Transverse colon (tissue), 4 donors: ENCODE measurements at regions of chr13 and their contacts with region 1.

Region 1: DNA sequence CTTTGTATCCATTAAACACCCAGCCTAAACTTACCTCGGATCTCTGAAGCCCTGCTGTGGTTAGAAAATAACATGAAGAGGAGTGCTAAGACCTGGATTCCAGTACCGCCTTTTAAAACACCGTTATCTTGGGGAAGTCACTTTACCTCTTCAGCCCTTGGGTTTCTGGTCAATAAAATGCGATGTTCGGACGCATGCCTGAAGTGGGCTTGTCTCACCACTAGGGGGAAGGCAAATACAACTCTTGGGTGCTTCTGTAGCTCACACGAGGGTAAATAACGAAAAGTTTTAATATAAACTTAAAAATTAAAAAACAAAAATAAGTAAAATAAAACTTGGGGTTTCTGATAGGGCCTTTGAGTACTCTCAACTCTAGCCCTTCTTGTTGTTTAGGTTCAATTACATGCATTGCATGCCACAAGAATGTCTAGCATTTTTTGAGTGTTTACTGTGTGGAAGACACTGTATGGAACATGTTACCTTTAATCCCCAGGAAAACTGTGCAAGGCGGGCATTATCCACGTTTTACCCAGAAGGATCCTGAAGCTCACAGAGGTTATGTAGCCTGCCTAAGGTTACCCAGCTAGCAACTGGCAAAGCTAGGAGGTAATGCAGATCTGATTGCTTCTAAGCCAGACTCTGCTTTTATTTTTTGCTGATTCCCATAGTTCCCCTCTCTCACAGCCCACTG is 240.4 kb downstream of the LMO7 start:
- DNase-seq: peak; percentile 53
- H3K4me3 ChIP-seq: no peak overlapping the region
- H3K27ac ChIP-seq: no peak overlapping the region
- H3K4me1 ChIP-seq: peaks cover 0 to 9% (median 0%) of the 10 kb centered on the region in 4 donors
- H3K27me3 ChIP-seq: no peaks in the 10 kb centered on the region
- CTCF ChIP-seq: peak; percentile 82 to 91 (median 87)
- EP300 ChIP-seq: no peak
- POLR2A ChIP-seq: no peak

Region 2: DNA sequence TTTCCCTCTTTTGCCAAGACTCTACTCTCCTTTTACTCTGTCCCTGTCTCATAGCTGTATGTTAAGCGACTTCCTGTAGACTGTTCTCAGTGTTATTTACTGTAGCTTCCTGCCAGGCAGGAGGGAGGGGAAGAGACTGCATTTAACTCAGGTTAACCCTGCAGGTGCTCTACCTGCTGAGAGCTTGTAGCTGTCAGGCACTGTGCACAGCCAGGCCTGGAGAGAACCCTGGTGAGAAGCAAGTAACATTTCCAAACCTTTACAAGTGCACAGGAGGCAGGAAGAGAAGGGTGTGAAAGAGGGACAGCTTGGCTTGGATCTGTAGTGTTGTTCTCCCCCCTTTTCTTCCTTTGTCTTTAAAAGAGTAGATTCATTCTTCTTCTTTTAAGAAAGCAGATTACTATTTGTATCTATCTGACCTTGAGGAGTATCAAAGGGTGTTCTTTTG is 73.3 kb before region 1 on chr13:
- in situ Hi-C with region 1: no loop called
- intact Hi-C with region 1: no loop called
- DNase-seq: peak; percentile 35
- H3K4me3 ChIP-seq: no peak overlapping the region
- H3K27ac ChIP-seq: peak overlapping the region; percentile 71 to 85 (median 78)
- H3K4me1 ChIP-seq: peaks cover 0 to 36% (median 16%) of the 10 kb centered on the region in 4 donors
- H3K27me3 ChIP-seq: no peaks in the 10 kb centered on the region
- CTCF ChIP-seq: no peak
- EP300 ChIP-seq: no peak
- POLR2A ChIP-seq: peak; percentile 49

Region 3: GRCh38 chr13:76016799-76017400 is 140.4 kb after region 1 on chr13:
- in situ Hi-C with region 1: no loop called
- intact Hi-C with region 1: loop called (anchors 10 kb)
- DNase-seq: peak; percentile 8
- H3K4me3 ChIP-seq: no peak overlapping the region
- H3K27ac ChIP-seq: no peak overlapping the region
- H3K4me1 ChIP-seq: peaks cover 0 to 3% (median 0%) of the 10 kb centered on the region in 4 donors
- H3K27me3 ChIP-seq: no peaks in the 10 kb centered on the region
- CTCF ChIP-seq: peak in 4 of 5 experiments; percentile 27 to 34 (median 32)
- EP300 ChIP-seq: no peak
- POLR2A ChIP-seq: no peak

Region 4: DNA sequence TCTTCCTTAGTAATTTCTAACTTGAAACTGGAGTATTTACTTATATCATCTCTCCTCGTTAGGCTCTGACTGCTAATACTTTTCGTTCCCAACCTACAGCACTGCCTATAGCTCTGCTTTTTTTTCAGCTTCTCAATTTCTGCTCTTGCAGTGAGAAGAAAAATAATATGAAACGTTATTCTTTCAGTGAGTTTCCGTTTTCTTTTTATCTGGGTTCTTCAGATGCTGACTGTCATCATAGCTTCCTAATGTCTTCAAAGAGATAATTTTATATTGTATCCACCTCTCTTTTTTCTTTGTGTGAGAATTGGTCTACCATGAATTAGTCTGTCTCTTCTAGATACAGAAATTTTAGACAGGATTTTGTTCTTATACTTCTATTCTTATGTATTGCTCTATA is 214.6 kb after region 1 on chr13:
- in situ Hi-C with region 1: no loop called
- intact Hi-C with region 1: no loop called
- DNase-seq: no peak
- H3K4me3 ChIP-seq: no peak overlapping the region
- H3K27ac ChIP-seq: no peak overlapping the region
- H3K4me1 ChIP-seq: no peaks in the 10 kb centered on the region
- H3K27me3 ChIP-seq: no peaks in the 10 kb centered on the region
- CTCF ChIP-seq: no peak
- EP300 ChIP-seq: no peak
- POLR2A ChIP-seq: no peak

Region 5: GRCh38 chr13:76473552-76474134 is 597.1 kb after region 1 on chr13:
- in situ Hi-C with region 1: loop called (anchors 5 to 10 kb)
- intact Hi-C with region 1: loop called (anchors 5 kb)
- DNase-seq: peak; percentile 73
- H3K4me3 ChIP-seq: no peak overlapping the region
- H3K27ac ChIP-seq: no peak overlapping the region
- H3K4me1 ChIP-seq: no peaks in the 10 kb centered on the region
- H3K27me3 ChIP-seq: no peaks in the 10 kb centered on the region
- CTCF ChIP-seq: peak; percentile 84 to 92 (median 85)
- EP300 ChIP-seq: no peak
- POLR2A ChIP-seq: no peak